Psoas muscle (tissue), 8 donors: ENCODE measurements at regions of chr1 and their contacts with region 1.

Region 1: GRCh38 chr1:33137800-33138199 is 44.0 kb downstream of the TRIM62 start:
- DNase-seq: peak in 1 of 2 donors; percentile 74
- ATAC-seq: peak in 3 of 4 donors; percentile 28 to 64 (median 50)
- H3K4me3 ChIP-seq: no peak overlapping the region
- H3K27ac ChIP-seq: no peak overlapping the region
- H3K4me1 ChIP-seq: peaks cover 18% of the 10 kb centered on the region
- H3K27me3 ChIP-seq: no peaks in the 10 kb centered on the region
- CTCF ChIP-seq: peak; percentile 31

Region 2: GRCh38 chr1:33080885-33081553 is 56.8 kb before region 1 on chr1 and contains the start of gene AZIN2:
- intact Hi-C with region 1: no loop called
- DNase-seq: peak; percentile 96 to 98
- ATAC-seq: peak; percentile 97 to 100 (median 99)
- H3K4me3 ChIP-seq: peak within 1 kb of the TSS; percentile 80
- H3K27ac ChIP-seq: peak within 1 kb of the TSS; percentile 39
- H3K4me1 ChIP-seq: peaks cover 6% of the 10 kb centered on the region
- H3K27me3 ChIP-seq: no peaks in the 10 kb centered on the region
- CTCF ChIP-seq: no peak
- total RNA-seq, gene AZIN2: 0.17 to 3.5 (median 1.1) TPM

Region 3: GRCh38 chr1:33195556-33195955 is 57.8 kb after region 1 on chr1:
- intact Hi-C with region 1: no loop called
- DNase-seq: no peak
- ATAC-seq: no peak
- H3K4me3 ChIP-seq: no peak overlapping the region
- H3K27ac ChIP-seq: no peak overlapping the region
- H3K4me1 ChIP-seq: no peaks in the 10 kb centered on the region
- H3K27me3 ChIP-seq: peaks cover 0 to 10% (median 3%) of the 10 kb centered on the region in 3 donors
- CTCF ChIP-seq: no peak

Region 4: GRCh38 chr1:33244143-33244820 is 106.5 kb after region 1 on chr1:
- intact Hi-C with region 1: loop called in 1 of 2 experiments (anchors 10 kb)
- DNase-seq: no peak
- ATAC-seq: no peak
- H3K4me3 ChIP-seq: no peak overlapping the region
- H3K27ac ChIP-seq: no peak overlapping the region
- H3K4me1 ChIP-seq: no peaks in the 10 kb centered on the region
- H3K27me3 ChIP-seq: no peaks in the 10 kb centered on the region
- CTCF ChIP-seq: no peak

Region 5: GRCh38 chr1:33378976-33379375 is 241.2 kb after region 1 on chr1:
- intact Hi-C with region 1: no loop called
- DNase-seq: no peak
- ATAC-seq: no peak
- H3K4me3 ChIP-seq: no peak overlapping the region
- H3K27ac ChIP-seq: no peak overlapping the region
- H3K4me1 ChIP-seq: peaks cover 37% of the 10 kb centered on the region
- H3K27me3 ChIP-seq: no peaks in the 10 kb centered on the region
- CTCF ChIP-seq: no peak

Region 6: DNA sequence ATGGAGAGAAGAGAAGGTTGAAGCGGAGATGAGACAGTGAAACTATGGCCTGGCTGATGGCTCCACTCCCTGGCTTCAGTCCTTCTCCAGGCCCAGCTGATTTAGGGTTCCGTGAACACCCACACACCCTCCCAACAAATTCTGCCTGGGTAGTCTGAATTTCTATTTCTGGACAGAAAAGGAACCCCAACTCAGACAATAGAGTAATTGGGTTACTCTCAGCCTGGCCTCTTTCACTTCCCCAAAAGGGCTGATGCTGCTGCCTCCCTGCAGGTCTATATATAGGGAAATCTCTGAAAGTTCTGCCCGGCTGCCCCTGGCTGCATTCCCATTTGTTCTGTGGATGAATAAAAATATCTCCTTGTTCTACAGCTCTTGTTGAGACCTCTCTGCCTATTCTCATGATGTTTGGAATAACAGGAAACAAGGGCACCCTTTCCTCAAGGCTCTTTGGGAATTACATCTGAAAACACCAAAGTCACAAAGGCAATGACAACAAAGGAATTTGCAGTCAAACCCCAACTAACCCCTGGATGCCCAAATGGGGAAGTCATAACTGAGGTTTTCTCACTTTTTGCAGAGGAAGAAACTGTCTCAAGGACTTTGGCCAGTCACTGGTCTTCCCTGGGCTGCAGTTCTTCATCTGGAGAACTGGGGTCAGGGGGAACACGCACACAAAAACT is 323.3 kb after region 1 on chr1:
- intact Hi-C with region 1: loop called (anchors 5 to 10 kb)
- DNase-seq: no peak
- ATAC-seq: peak in 2 of 4 donors; percentile 15 to 29
- H3K4me3 ChIP-seq: no peak overlapping the region
- H3K27ac ChIP-seq: peak overlapping the region; percentile 70
- H3K4me1 ChIP-seq: peaks cover 24% of the 10 kb centered on the region
- H3K27me3 ChIP-seq: no peaks in the 10 kb centered on the region
- CTCF ChIP-seq: no peak

Region 7: GRCh38 chr1:33986390-33987095 is 848.7 kb after region 1 on chr1:
- intact Hi-C with region 1: no loop called
- DNase-seq: peak; percentile 62 to 71
- ATAC-seq: peak; percentile 68 to 90 (median 82)
- H3K4me3 ChIP-seq: no peak overlapping the region
- H3K27ac ChIP-seq: no peak overlapping the region
- H3K4me1 ChIP-seq: no peaks in the 10 kb centered on the region
- H3K27me3 ChIP-seq: peaks cover 0 to 10% (median 2%) of the 10 kb centered on the region in 3 donors
- CTCF ChIP-seq: no peak